PC-9 (cell line): ENCODE measurements at regions of chr5 and their contacts with region 1.

Region 1: GRCh38 chr5:134430001-134430569 is 18.4 kb upstream of the CDKN2AIPNL start:
- DNase-seq: no peak
- H3K4me3 ChIP-seq: no peak overlapping the region
- H3K27ac ChIP-seq: no peak overlapping the region
- H3K4me1 ChIP-seq: peaks cover 7% of the 10 kb centered on the region
- H3K27me3 ChIP-seq: no peaks in the 10 kb centered on the region
- CTCF ChIP-seq: no peak

Region 2: DNA sequence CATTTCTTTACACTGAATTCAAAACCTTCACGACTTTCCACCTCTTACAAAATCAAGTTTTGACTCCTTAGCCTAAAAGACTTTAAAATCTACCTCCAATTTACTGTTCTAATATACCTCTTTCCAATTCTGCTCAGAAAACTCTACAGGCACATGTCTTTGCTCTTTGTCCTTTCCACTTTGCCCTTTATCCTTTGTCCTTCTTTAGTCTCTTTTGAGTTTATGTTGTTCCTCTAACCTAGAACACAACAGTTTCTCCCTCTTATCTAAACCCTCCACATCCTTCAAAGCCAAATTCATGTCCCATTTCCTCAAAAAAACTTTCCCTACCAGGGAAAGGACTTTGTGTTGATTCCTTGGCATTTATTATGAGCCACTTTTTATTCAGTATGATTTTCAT is 64.5 kb before region 1 on chr5:
- CTCF ChIA-PET with region 1: no interaction called
- POLR2A ChIA-PET with region 1: interaction called, 13 read pairs
- intact Hi-C with region 1: no loop called
- DNase-seq: no peak
- H3K4me3 ChIP-seq: peak overlapping the region; percentile 86; the same call in 1 of the 2 replicates
- H3K27ac ChIP-seq: no peak overlapping the region
- H3K4me1 ChIP-seq: peaks cover 20% of the 10 kb centered on the region
- H3K27me3 ChIP-seq: no peaks in the 10 kb centered on the region
- CTCF ChIP-seq: no peak